Vagina (tissue), 2 donors: ENCODE measurements at regions of chr9 and their contacts with region 1.

Region 1: GRCh38 chr9:122125158-122125508 is 32.0 kb upstream of the TTLL11 start:
- DNase-seq: no peak
- H3K4me3 ChIP-seq: no peak overlapping the region
- H3K27ac ChIP-seq: no peak overlapping the region
- H3K4me1 ChIP-seq: peaks cover 15% of the 10 kb centered on the region
- H3K27me3 ChIP-seq: peaks cover 4% of the 10 kb centered on the region
- CTCF ChIP-seq: peak; percentile 79 to 93 (median 93)
- POLR2A ChIP-seq: no peak

Region 2: GRCh38 chr9:122350638-122351355 is 225.7 kb after region 1 on chr9:
- intact Hi-C with region 1: loop called (anchors 2 kb)
- DNase-seq: no peak
- H3K4me3 ChIP-seq: no peak overlapping the region
- H3K27ac ChIP-seq: no peak overlapping the region
- H3K4me1 ChIP-seq: peaks cover 18% of the 10 kb centered on the region
- H3K27me3 ChIP-seq: no peaks in the 10 kb centered on the region
- CTCF ChIP-seq: peak; percentile 94 to 98 (median 96)
- POLR2A ChIP-seq: no peak